Activated CD4-positive, alpha-beta memory T cell treated with anti-CD3 and anti-CD28 coated beads for 36 hours (primary cell): ENCODE measurements at regions of chr1 and their contacts with region 1.

Region 1: DNA sequence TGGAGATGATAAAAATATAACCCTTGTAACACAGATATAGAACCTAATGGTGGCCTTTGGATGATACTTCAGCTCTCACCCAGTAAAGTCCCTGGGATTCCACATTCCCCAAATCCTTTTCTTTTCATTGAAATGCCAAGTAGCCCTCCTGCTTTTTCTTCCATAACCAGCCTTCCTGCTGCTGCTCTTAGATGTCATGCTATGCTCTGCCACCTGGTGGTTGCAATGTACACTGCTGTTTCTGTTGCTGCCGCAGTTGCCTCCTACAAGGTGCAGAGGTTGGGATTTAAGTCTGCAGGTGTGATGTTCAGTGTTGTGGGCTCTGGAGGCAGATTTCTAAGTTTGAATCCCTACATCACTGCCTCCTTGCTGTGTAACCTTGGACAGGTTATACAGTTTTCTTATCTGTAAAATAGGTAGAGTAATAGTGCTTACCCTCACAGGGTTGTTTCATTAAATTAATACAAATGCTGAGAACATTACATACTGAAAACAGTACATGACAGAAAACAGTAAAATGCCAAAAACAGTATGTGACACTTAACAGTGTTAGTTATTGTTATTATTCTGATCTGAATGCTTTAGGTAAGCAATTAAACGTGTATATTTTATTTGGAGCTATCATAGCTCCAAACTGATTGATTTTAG is 64.3 kb downstream of the CAMSAP2 start:
- DNase-seq: peak; percentile 83
- H3K4me3 Mint-ChIP-seq: no peak overlapping the region
- H3K27ac Mint-ChIP-seq: no peak overlapping the region
- H3K4me1 Mint-ChIP-seq: no peaks in the 10 kb centered on the region
- H3K27me3 Mint-ChIP-seq: no peaks in the 10 kb centered on the region

Region 2: GRCh38 chr1:200558866-200559459 is 244.0 kb before region 1 on chr1:
- CTCF ChIA-PET with region 1: interaction called, 39 read pairs
- POLR2A ChIA-PET with region 1: no interaction called
- intact Hi-C with region 1: loop called (anchors 1 kb)
- DNase-seq: no peak
- H3K4me3 Mint-ChIP-seq: no peak overlapping the region
- H3K27ac Mint-ChIP-seq: no peak overlapping the region
- H3K4me1 Mint-ChIP-seq: peaks cover 8% of the 10 kb centered on the region
- H3K27me3 Mint-ChIP-seq: no peaks in the 10 kb centered on the region

Region 3: GRCh38 chr1:200738740-200739498 is 64.1 kb before region 1 on chr1 and contains the start of gene CAMSAP2:
- CTCF ChIA-PET with region 1: interaction called, 3 read pairs
- POLR2A ChIA-PET with region 1: no interaction called
- intact Hi-C with region 1: loop called (anchors 2 kb)
- DNase-seq: peak; percentile 73
- H3K4me3 Mint-ChIP-seq: peak within 1 kb of the TSS; percentile 96
- H3K27ac Mint-ChIP-seq: peak within 1 kb of the TSS; percentile 88
- H3K4me1 Mint-ChIP-seq: peaks cover 34% of the 10 kb centered on the region
- H3K27me3 Mint-ChIP-seq: peaks cover 3% of the 10 kb centered on the region
- total RNA-seq, gene CAMSAP2: 3.0 to 4.1 TPM

Region 4: GRCh38 chr1:200938955-200939354 is 136.0 kb after region 1 on chr1:
- CTCF ChIA-PET with region 1: no interaction called
- POLR2A ChIA-PET with region 1: no interaction called
- intact Hi-C with region 1: no loop called
- DNase-seq: peak; percentile 31
- H3K4me3 Mint-ChIP-seq: no peak overlapping the region
- H3K27ac Mint-ChIP-seq: no peak overlapping the region
- H3K4me1 Mint-ChIP-seq: peaks cover 4% of the 10 kb centered on the region
- H3K27me3 Mint-ChIP-seq: no peaks in the 10 kb centered on the region